ENCODE measurements at regions of chr2 and their contacts with region 1.

Region 1: GRCh38 chr2:30146438-30147147 is at the start of gene YPEL5:
- DNase-seq: peak; percentile 99
- H3K4me3 Mint-ChIP-seq: peak within 1 kb of the TSS; percentile 83
- H3K27ac Mint-ChIP-seq: peak within 1 kb of the TSS; percentile 95
- H3K4me1 Mint-ChIP-seq: peaks cover 41% of the 10 kb centered on the region
- H3K27me3 Mint-ChIP-seq: no peaks in the 10 kb centered on the region
- total RNA-seq, gene YPEL5: 25.1 and 27.3 TPM in 2 replicates

Region 2: DNA sequence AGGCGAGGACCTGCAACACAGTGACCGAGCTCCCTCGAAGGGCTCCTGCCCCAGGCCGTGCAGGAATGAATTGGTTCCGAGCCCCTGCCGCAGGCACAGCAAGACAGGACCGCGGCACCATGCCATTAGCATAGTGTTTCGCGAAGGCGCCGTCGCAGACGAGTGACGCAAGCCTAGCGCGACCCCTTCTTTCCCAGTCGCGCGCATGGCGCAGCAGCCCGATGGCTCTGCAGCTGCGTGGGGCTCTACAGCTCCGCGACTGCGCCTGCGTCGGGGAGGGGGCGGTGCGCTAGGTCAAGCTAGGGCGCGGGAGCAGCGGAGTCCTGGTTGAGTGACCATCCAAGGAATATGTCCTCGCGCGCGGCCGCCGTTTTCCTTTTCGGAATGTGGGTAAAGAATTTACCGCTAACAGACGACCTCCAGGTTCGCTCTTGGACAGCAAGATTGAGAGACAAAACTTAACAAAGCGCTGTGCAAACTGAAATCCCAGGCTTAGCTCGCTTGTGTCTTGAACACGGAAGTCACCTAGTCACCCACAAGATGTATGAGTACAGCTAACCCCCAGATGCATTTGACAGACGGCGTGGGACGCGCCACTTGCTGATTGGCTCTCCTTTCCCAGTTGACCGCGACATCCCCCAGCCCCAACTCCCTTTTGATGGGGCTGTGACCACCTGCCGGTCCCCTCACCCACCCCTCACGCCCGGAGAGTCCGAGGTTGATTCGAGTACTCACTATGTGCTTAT is 1276.3 kb before region 1 on chr2 and contains the start of gene TRMT61B:
- intact Hi-C with region 1: loop called (anchors 1 kb)
- DNase-seq: peak; percentile 97
- H3K4me3 Mint-ChIP-seq: peak within 1 kb of the TSS; percentile 97
- H3K27ac Mint-ChIP-seq: peak within 1 kb of the TSS; percentile 93
- H3K4me1 Mint-ChIP-seq: peaks cover 23% of the 10 kb centered on the region
- H3K27me3 Mint-ChIP-seq: peaks cover 6% of the 10 kb centered on the region
- total RNA-seq, gene TRMT61B: 18.4 and 21.4 TPM in 2 replicates

Region 3: GRCh38 chr2:30165617-30166016 is 19.0 kb after region 1 on chr2:
- intact Hi-C with region 1: no loop called
- DNase-seq: no peak
- H3K4me3 Mint-ChIP-seq: no peak overlapping the region
- H3K27ac Mint-ChIP-seq: no peak overlapping the region
- H3K4me1 Mint-ChIP-seq: peaks cover 5% of the 10 kb centered on the region
- H3K27me3 Mint-ChIP-seq: peaks cover 3% of the 10 kb centered on the region

Region 4: GRCh38 chr2:30231212-30231995 is 84.8 kb after region 1 on chr2 and contains the start of gene LBH:
- intact Hi-C with region 1: loop called (anchors 1 kb)
- DNase-seq: peak; percentile 74
- H3K4me3 Mint-ChIP-seq: peak within 1 kb of the TSS; percentile 98
- H3K27ac Mint-ChIP-seq: peak within 1 kb of the TSS; percentile 99
- H3K4me1 Mint-ChIP-seq: peaks cover 72% of the 10 kb centered on the region
- H3K27me3 Mint-ChIP-seq: peaks cover 7% of the 10 kb centered on the region
- total RNA-seq, gene LBH: 306 and 313 TPM in 2 replicates

Region 5: DNA sequence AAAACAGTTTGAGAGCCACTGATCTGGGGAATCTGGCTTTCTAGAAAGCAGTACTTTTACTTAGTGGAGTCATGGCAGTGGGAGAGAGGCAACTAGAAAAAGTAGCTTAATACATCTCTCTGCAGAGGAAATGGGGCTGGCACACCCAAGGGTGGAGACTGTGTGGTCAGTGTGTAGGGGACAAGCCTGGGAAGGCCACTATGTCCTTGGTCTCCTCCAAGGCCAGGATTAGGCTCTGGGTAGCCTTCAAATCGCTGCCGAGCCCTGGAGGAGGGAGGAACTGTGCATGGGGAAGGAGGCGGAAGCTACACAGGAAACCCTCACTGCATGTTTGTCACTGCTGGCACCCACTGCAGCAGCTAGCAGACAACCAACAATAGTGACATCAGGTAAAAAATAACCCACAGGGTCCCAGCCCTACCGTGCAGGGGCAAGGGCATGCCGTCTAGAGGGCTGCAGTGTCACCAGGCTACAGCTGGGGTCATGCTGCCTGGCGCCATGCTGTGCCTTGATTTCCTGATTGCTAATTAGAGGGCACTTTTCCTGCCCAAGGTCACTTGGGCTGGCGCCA is 119.5 kb after region 1 on chr2:
- intact Hi-C with region 1: loop called (anchors 1 kb)
- DNase-seq: peak; percentile 51
- H3K4me3 Mint-ChIP-seq: peak overlapping the region; percentile 84
- H3K27ac Mint-ChIP-seq: peak overlapping the region; percentile 97
- H3K4me1 Mint-ChIP-seq: peaks cover 82% of the 10 kb centered on the region
- H3K27me3 Mint-ChIP-seq: no peaks in the 10 kb centered on the region

Region 6: GRCh38 chr2:30711646-30712085 is 565.1 kb after region 1 on chr2:
- intact Hi-C with region 1: loop called (anchors 1 kb)
- DNase-seq: peak; percentile 80
- H3K4me3 Mint-ChIP-seq: no peak overlapping the region
- H3K27ac Mint-ChIP-seq: no peak overlapping the region
- H3K4me1 Mint-ChIP-seq: peaks cover 16% of the 10 kb centered on the region
- H3K27me3 Mint-ChIP-seq: no peaks in the 10 kb centered on the region

Region 7: GRCh38 chr2:32063310-32064161 is 1916.9 kb after region 1 on chr2 and contains the start of gene SPAST:
- intact Hi-C with region 1: loop called (anchors 1 kb)
- DNase-seq: peak; percentile 96
- H3K4me3 Mint-ChIP-seq: peak within 1 kb of the TSS; percentile 97
- H3K27ac Mint-ChIP-seq: peak within 1 kb of the TSS; percentile 95
- H3K4me1 Mint-ChIP-seq: peaks cover 31% of the 10 kb centered on the region
- H3K27me3 Mint-ChIP-seq: peaks cover 6% of the 10 kb centered on the region
- total RNA-seq, gene SPAST: 18.9 and 21.0 TPM in 2 replicates